HCT116 (cell line): ENCODE measurements at regions of chr11 and their contacts with region 1.

Region 1: DNA sequence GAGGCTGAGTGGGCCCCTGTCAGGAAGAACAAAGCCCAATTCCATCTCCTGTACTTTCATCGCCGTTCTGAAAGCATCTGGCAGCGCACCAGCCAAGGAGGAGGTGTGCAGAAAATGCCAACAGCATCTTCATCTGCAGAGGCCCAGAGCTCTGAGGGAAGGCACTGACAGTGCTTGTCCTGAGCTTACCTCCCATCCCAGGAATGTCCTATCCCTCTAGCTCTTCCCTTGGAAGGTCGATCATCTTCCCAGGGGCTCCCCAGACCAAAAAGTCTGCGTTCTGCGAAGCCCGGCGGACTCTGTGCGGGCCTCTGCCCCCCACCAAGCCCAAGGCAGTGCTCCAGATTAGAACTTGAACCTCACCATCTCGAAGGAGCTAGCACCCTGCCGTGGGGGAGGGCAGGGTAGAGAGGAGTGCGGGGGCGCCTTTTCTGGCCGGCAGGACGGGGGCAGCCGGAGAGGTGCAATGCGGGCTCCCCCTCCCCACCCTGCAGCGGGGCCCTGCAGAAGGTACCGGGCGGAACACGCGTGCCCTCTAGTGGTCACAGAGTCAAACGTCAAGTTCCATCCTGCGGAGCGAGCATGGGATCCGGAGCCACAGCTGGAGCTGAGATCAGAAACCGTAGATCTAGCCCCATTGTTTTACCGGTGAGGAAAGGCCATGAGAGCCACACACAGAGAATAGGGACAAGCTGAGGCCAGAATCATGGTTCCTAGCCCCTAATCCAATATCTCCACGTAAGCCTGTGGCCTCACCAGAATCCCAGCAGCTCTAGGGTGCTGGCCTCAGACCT is 5.0 kb downstream of the SCN2B start:
- DNase-seq: no peak
- ATAC-seq: peak; percentile 93
- H3K4me3 ChIP-seq: no peak overlapping the region
- H3K27ac ChIP-seq: no peak overlapping the region
- H3K4me1 ChIP-seq: peaks cover 0 to 7% of the 10 kb centered on the region in 2 experiments; a peak in 1 of 4 replicates
- H3K27me3 ChIP-seq: no peaks in the 10 kb centered on the region
- CTCF ChIP-seq: peak; percentile 81 to 93 (median 82)
- POLR2A ChIP-seq: no peak
- RAD21 ChIP-seq: peak; percentile 95

Region 2: DNA sequence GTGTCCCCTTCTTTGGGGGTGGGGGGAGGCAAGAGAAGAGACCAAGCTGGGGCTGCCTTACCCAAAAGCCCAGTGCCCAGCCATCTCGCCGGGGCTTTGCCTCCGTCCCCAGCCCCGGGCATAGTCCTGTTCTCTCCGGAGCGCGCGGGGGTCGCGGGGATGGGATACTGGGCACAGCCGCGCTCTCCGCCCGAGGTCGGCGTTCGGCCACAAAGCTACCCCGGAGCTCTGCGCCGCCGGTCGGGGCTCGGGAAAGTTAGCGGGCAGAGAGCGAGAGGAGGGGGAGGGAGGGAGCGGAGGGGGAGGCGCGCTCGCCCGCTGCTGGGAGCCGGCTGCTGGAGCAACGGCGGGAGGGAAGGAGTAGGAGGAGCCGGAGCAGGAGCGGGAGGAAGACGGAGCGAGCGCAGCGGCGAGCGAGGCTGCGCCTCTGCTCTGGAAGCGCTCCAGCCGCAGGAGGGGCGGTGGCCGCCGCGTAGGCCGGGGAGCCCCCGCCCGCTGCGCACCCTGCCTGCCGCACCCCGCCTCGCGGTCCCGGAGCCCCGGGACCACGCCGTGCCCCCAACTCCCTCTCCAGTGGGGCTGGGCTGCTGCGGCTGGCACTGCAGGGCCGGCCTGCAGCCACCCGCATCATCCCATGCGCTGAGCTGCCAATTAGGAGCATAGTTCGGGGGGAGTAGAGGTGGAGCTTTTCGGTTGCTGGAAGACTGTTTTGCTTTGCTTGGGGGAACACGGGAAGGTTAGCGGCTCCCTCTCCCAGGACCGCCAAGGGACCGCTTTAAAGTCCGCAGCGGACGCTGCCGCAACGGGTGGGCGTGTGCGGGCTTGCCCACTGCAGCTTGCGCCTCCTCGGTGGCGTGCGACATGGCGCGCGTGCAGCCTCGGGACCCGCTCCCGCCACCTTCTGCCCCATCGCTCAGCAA is 18.7 kb before region 1 on chr11 and contains the start of gene SCN4B:
- CTCF ChIA-PET with region 1: interaction called, 14 read pairs
- POLR2A ChIA-PET with region 1: no interaction called
- RAD21 ChIA-PET with region 1: interaction called, 3 to 4 read pairs
- intact Hi-C with region 1: no loop called
- DNase-seq: no peak
- ATAC-seq: peak; percentile 80
- H3K4me3 ChIP-seq: peak within 1 kb of the TSS; percentile 21 to 50
- H3K27ac ChIP-seq: no peak within 1 kb of the TSS; the same call in 1 of the 2 replicates
- H3K4me1 ChIP-seq: peaks cover 10 to 24% of the 10 kb centered on the region in 2 experiments; a peak in 3 of 4 replicates
- H3K27me3 ChIP-seq: no peaks in the 10 kb centered on the region
- CTCF ChIP-seq: no peak
- POLR2A ChIP-seq: no peak
- RAD21 ChIP-seq: no peak
- total RNA-seq, gene SCN4B: 0.32 TPM